GM18951 (cell line): ENCODE measurements at regions of chr2 and their contacts with region 1.

Region 1: DNA sequence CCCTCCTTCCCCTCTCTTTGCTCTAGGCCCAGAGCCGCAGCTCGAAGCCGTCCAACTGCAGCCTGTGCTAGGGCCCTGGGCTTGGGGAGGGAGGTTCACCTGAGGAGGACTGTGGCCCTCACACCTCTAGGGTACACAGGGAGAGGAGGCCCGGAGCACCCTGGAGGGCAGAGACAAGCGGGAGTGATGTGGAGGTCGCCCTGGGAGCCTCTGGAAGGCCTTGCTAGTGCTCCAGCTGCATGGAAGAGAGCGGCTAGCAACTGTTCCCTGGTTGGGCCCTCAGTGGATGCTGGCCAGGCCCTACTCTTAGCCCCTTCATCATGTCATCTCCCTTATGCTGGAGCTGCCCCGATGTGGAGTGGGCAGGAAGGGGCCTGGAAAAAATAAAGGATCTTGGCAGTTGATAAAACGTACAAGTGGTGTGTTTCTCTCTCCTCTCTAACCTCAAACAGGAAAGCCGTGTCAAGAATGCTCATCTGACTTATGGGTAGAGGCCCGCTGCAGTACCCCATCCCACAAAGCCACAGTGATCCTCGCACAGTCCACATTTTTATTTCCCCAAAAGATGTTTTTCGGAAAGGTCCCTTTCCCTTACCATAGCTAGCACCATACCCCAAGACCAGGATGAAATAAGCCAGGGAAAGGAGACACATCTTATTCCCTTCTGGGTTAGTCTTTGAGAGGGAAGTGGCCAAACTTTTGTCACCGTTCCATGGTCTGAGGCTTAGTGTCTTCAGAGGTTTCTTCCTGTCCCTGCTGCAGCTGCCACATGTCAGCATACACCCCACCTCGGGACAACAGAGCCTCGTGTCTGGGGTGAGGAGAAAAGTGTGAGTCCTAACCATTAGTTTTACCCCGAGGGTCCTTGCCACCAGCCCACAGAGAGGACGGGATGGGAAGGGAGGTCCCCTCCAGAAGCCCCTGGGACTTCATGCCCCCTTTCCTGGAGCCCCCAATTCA is 2.9 kb downstream of the ZFAND2B start:
- POLR2A ChIP-seq: no peak

Region 2: GRCh38 chr2:219160186-219161017 is 49.1 kb before region 1 on chr2 and contains the start of gene NHEJ1:
- in situ Hi-C with region 1: loop called (anchors 5 kb)
- POLR2A ChIP-seq: peak; percentile 89